ENCODE measurements at regions of chr17 and their contacts with region 1.

Region 1: DNA sequence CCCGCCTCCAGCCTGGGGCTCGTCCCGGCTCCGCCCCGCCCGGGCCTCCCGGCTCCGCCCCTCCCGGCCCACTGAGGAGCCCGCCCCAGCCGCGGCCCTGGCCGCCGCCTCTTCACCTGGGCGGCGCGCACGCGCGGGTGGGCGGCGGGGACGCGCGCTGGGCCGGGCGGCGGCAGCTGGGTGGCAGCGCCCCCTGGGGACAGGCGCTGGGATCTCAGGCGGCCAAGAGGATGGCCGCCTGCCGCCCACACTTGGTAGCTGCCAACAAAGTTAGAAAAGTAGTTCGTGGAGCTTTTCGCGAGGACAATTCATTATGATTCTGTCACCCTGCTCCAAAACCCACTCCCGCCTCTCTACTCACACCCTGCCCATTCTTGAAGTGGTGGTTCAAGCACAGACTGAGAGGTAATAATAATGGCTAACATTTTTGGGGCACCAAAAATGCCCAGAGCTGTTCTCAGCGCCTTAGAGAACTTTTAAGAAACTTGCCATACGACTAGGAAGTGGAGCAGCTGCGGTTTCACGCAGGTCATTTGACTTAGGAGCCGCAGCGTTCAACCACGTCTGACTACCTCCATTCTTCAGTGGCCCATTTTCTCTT is 340 bp upstream of the MYO1D start:
- DNase-seq: peak; percentile 98
- H3K4me3 ChIP-seq: peak overlapping the region; percentile 76 to 95
- H3K27ac ChIP-seq: peak overlapping the region in 1 of 2 experiments; percentile 44; a peak in 3 of 4 replicates
- H3K4me1 ChIP-seq: peaks cover 0 to 8% of the 10 kb centered on the region in 2 experiments; a peak in 2 of 4 replicates
- H3K27me3 ChIP-seq: no peaks in the 10 kb centered on the region
- CTCF ChIP-seq: peak; percentile 76
- EP300 ChIP-seq: no peak
- RAD21 ChIP-seq: peak; percentile 71

Region 2: GRCh38 chr17:32769839-32770238 is 107.4 kb before region 1 on chr17:
- CTCF ChIA-PET with region 1: interaction called, 31 read pairs
- POLR2A ChIA-PET with region 1: no interaction called
- DNase-seq: no peak
- H3K4me3 ChIP-seq: no peak overlapping the region
- H3K27ac ChIP-seq: no peak overlapping the region
- H3K4me1 ChIP-seq: no peaks in the 10 kb centered on the region; a peak in 1 of 4 replicates
- H3K27me3 ChIP-seq: no peaks in the 10 kb centered on the region
- CTCF ChIP-seq: no peak
- EP300 ChIP-seq: no peak
- RAD21 ChIP-seq: peak; percentile 22; the same call in 1 of the 2 replicates

Region 3: GRCh38 chr17:32794533-32795246 is 82.6 kb before region 1 on chr17:
- CTCF ChIA-PET with region 1: interaction called, 28 read pairs
- POLR2A ChIA-PET with region 1: no interaction called
- DNase-seq: no peak
- H3K4me3 ChIP-seq: no peak overlapping the region
- H3K27ac ChIP-seq: no peak overlapping the region
- H3K4me1 ChIP-seq: peaks cover 0 to 8% of the 10 kb centered on the region in 2 experiments; a peak in 2 of 4 replicates
- H3K27me3 ChIP-seq: no peaks in the 10 kb centered on the region
- CTCF ChIP-seq: no peak
- EP300 ChIP-seq: no peak
- RAD21 ChIP-seq: no peak

Region 4: DNA sequence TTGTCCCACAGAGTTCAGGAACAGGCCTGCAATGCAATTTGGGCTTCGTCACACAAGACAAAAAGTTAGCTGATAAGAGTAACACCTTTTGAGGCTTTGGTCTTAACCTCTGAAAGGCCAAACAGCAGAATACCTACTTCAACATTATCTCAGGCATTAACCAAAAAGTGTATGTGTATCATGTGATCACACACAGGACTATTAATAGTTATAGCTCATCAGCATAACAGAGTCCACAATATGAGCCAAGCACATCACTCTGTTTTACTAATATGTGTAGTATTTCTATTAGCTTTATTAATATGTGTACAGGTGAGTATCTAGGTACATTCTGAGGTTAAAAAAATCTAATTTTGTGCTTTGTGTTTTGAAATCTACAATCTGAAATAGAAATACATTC is 31.1 kb before region 1 on chr17:
- CTCF ChIA-PET with region 1: interaction called, 12 read pairs
- POLR2A ChIA-PET with region 1: no interaction called
- DNase-seq: no peak
- H3K4me3 ChIP-seq: no peak overlapping the region
- H3K27ac ChIP-seq: no peak overlapping the region
- H3K4me1 ChIP-seq: no peaks in the 10 kb centered on the region
- H3K27me3 ChIP-seq: no peaks in the 10 kb centered on the region
- CTCF ChIP-seq: no peak
- EP300 ChIP-seq: no peak
- RAD21 ChIP-seq: no peak

Region 5: DNA sequence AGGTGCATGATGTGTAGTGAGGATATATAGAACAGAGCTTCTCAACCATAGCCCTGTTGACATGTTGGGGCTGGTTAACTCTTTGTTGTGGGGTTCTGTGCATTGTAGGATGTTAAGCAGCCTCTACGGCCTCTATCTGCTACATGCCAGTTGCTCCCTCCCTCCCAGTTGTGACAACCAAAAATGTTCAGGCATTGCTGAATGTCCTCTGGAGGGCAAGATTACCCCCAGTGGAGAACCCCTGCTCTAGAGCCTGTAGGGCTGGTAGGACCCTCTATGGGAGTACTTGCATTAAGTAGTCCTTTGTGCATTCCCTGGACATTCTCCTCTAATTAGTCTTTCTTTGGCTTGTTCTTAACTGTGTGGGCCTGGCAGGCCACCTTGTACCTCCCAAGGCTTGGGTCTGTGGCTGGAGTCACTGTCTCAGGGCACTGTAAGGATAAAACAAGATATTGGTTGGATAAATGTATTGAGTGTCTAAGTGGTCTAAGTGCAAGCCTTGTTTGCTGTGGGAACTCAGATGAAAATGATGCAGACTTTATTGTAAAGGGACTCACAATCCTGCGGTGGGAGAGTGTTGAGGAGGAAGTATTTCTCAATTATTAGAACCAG is 19.5 kb after region 1 on chr17:
- CTCF ChIA-PET with region 1: interaction called, 15 read pairs
- POLR2A ChIA-PET with region 1: no interaction called
- DNase-seq: no peak
- H3K4me3 ChIP-seq: no peak overlapping the region
- H3K27ac ChIP-seq: no peak overlapping the region
- H3K4me1 ChIP-seq: no peaks in the 10 kb centered on the region; a peak in 1 of 4 replicates
- H3K27me3 ChIP-seq: no peaks in the 10 kb centered on the region; the same call in 1 of the 2 replicates
- CTCF ChIP-seq: no peak
- EP300 ChIP-seq: no peak
- RAD21 ChIP-seq: no peak

Region 6: DNA sequence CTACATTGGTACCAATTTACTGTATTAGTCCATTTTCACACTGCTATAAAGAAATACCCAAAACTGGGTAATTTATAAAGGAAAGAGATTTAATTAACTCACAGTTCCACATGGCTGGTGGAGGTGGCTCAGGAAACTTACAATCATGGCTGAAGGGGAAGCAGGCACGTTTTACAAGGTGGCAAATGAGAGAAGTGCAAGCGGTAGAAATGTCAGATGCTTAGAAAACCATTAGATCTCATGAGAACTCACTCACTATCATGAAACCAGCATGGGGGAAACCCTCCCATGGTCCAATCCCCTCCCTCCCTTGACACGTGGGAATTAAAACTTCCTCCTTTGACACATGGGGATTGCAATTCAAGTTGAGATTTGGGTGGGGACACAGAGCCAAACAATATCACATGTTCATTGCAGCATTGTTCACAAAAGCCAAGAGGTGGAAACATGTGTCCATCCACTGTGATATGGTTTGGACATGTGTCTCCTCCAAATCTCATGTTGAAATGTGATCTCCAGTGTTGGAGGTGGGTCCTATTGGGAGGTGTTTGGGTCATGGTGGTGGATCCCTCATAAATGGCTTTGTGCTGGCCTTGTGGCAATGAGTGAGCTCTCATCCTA is 111.3 kb after region 1 on chr17:
- CTCF ChIA-PET with region 1: no interaction called
- POLR2A ChIA-PET with region 1: no interaction called
- DNase-seq: no peak
- H3K4me3 ChIP-seq: no peak overlapping the region
- H3K27ac ChIP-seq: no peak overlapping the region
- H3K4me1 ChIP-seq: no peaks in the 10 kb centered on the region
- H3K27me3 ChIP-seq: 0 out of 2 replicates have a peak, but pooled peaks cover 6% of the 10 kb centered on the region
- CTCF ChIP-seq: no peak
- EP300 ChIP-seq: no peak
- RAD21 ChIP-seq: no peak